OCI-LY7 (cell line): ENCODE measurements at regions of chr1 and their contacts with region 1.

Region 1: DNA sequence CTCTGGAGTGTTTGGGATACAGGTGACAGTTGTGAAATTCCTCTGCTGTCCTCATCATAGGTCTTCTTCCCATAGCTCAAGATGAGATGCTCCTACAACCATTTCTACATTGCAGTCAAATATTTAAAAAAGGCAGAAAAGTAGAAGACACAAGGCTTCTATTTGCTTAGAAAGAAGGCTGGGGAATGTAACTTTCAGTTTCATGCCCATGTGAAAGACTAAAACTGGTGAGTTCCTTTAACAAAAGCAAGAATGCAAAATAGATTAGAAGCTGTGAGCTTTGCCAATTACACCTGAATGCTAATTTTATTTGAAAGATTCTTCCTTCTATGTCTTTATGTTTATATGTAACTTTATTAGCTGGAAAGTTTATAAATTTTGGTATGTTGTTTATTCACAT is 1682.7 kb downstream of the BRINP3 start:
- DNase-seq: no peak
- H3K4me3 ChIP-seq: no peak overlapping the region
- H3K27ac ChIP-seq: no peak overlapping the region
- H3K4me1 ChIP-seq: no peaks in the 10 kb centered on the region
- CTCF ChIP-seq: no peak

Region 2: DNA sequence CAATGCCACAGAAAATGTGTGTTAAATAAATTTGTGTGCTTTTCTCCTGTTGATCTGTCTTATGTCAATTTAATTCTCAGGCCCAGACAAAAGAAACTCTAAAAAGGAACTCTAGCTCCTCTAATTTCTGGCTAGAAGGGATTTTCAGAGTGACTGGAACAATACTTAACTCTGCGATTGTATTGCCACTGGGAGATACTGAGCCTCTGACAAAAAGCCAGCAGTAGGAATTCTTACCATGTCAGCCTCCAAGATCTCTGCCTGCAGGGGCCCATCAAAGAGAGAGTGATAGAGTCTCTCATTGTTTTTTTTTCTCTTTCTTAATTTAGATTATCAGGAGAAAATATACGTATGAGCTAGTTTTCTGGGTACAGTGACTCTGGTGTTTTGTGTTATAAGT is 516.9 kb after region 1 on chr1:
- CTCF ChIA-PET with region 1: no interaction called
- POLR2A ChIA-PET with region 1: no interaction called
- intact Hi-C with region 1: no loop called
- DNase-seq: no peak
- H3K4me3 ChIP-seq: no peak overlapping the region
- H3K27ac ChIP-seq: no peak overlapping the region
- H3K4me1 ChIP-seq: no peaks in the 10 kb centered on the region
- CTCF ChIP-seq: no peak

Region 3: DNA sequence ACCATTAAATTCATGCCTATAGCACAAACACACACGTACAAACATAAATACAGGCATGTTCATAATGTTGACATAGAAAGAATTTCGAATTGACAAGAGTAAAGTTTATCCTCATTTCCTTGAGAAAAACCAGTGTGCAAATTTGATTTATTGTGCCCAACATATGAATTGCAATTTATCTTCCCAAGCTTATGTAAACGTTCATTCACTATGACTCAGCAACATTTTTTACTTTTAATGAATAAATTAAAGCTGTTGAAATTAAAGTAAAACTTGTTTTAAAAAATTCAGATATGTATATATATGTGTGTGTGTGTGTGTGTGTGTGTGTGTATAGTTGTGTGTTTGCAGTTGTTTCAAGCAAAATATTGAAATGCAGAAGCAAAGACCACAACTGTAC is 614.8 kb after region 1 on chr1:
- CTCF ChIA-PET with region 1: no interaction called
- POLR2A ChIA-PET with region 1: no interaction called
- intact Hi-C with region 1: loop called (anchors 5 kb)
- DNase-seq: no peak
- H3K4me3 ChIP-seq: no peak overlapping the region
- H3K27ac ChIP-seq: no peak overlapping the region
- H3K4me1 ChIP-seq: no peaks in the 10 kb centered on the region
- CTCF ChIP-seq: no peak